Natural killer cell (primary cell): ENCODE measurements at regions of chr12 and their contacts with region 1.

Region 1: DNA sequence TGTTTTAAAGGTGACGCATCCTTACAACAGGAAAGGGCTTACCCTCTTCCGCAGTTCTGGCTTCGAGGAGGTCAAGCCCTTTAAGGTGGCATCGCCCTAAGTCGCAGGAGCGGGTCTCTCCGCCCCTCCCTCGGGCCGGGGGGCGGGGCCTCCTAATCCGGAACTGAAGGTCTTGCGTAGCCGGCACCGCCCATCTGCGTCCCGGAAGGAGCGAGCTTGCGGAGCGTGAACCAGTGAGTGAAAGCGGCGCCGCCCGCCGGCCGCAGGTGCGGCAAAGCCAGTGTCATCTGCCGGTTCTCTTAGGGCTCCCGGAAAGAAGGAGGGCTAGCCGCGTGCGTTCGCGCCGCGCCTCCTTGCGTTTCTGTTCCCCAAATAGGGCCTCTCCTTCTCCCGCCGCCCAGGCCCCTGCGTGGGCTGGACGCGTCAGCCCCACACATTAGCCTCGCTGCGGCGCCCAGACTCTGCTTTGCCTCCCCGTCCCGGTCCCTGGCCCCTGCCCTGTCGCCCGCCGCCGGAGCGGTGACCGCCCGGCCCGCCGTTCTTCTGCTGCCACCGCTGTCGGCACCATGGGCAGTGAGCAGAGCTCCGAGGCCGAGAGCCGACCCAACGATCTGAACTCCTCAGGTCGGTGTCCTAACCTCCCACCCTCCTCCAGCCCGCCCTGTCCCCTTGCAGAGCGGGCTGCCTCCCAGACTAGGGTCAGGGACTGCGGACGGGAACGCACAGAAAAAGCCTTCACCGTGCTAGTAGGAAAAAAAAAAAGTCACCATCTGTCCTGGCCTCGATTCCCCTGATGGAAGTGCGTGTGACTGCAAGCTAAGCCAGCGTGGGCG is at the start of gene BORCS5:
- DNase-seq: peak; percentile 95 to 99
- ATAC-seq: peak; percentile 92 to 98 (median 94)
- H3K4me3 ChIP-seq: peak within 1 kb of the TSS; percentile 78
- H3K4me3 Mint-ChIP-seq: peak within 1 kb of the TSS; percentile 96
- H3K27ac ChIP-seq: peak within 1 kb of the TSS; percentile 97
- H3K27ac Mint-ChIP-seq: peak within 1 kb of the TSS; percentile 92 to 97
- H3K4me1 ChIP-seq: peaks cover 23% of the 10 kb centered on the region
- H3K4me1 Mint-ChIP-seq: peaks cover 26 to 31% of the 10 kb centered on the region in 2 donors
- H3K27me3 ChIP-seq: no peaks in the 10 kb centered on the region
- H3K27me3 Mint-ChIP-seq: no peaks in the 10 kb centered on the region
- CTCF ChIP-seq: no peak
- total RNA-seq, gene BORCS5: 28.5 to 32.8 (median 29.2) TPM

Region 2: GRCh38 chr12:12384571-12385340 is 27.7 kb after region 1 on chr12:
- intact Hi-C with region 1: loop called (anchors 2 kb)
- DNase-seq: peak; percentile 39 to 66
- ATAC-seq: peak; percentile 64 to 73 (median 69)
- H3K4me3 ChIP-seq: no peak overlapping the region
- H3K4me3 Mint-ChIP-seq: peak overlapping the region; percentile 85
- H3K27ac ChIP-seq: peak overlapping the region; percentile 68
- H3K27ac Mint-ChIP-seq: peak overlapping the region; percentile 91 to 96
- H3K4me1 ChIP-seq: peaks cover 38% of the 10 kb centered on the region
- H3K4me1 Mint-ChIP-seq: peaks cover 55% of the 10 kb centered on the region in 2 donors
- H3K27me3 ChIP-seq: no peaks in the 10 kb centered on the region
- H3K27me3 Mint-ChIP-seq: no peaks in the 10 kb centered on the region
- CTCF ChIP-seq: no peak

Region 3: GRCh38 chr12:12562585-12563261 is 205.6 kb after region 1 on chr12 and contains the start of gene DUSP16:
- intact Hi-C with region 1: loop called (anchors 5 kb)
- DNase-seq: peak; percentile 74 to 93
- ATAC-seq: peak; percentile 74 to 92 (median 84)
- H3K4me3 ChIP-seq: peak within 1 kb of the TSS; percentile 67
- H3K4me3 Mint-ChIP-seq: peak within 1 kb of the TSS; percentile 95
- H3K27ac ChIP-seq: peak within 1 kb of the TSS; percentile 88
- H3K27ac Mint-ChIP-seq: peak within 1 kb of the TSS; percentile 90 to 96
- H3K4me1 ChIP-seq: peaks cover 10% of the 10 kb centered on the region
- H3K4me1 Mint-ChIP-seq: peaks cover 10 to 13% of the 10 kb centered on the region in 2 donors
- H3K27me3 ChIP-seq: no peaks in the 10 kb centered on the region
- H3K27me3 Mint-ChIP-seq: peaks cover 0 to 3% of the 10 kb centered on the region in 2 donors
- CTCF ChIP-seq: no peak
- total RNA-seq, gene DUSP16: 6.9 to 19.9 (median 10.0) TPM

Region 4: DNA sequence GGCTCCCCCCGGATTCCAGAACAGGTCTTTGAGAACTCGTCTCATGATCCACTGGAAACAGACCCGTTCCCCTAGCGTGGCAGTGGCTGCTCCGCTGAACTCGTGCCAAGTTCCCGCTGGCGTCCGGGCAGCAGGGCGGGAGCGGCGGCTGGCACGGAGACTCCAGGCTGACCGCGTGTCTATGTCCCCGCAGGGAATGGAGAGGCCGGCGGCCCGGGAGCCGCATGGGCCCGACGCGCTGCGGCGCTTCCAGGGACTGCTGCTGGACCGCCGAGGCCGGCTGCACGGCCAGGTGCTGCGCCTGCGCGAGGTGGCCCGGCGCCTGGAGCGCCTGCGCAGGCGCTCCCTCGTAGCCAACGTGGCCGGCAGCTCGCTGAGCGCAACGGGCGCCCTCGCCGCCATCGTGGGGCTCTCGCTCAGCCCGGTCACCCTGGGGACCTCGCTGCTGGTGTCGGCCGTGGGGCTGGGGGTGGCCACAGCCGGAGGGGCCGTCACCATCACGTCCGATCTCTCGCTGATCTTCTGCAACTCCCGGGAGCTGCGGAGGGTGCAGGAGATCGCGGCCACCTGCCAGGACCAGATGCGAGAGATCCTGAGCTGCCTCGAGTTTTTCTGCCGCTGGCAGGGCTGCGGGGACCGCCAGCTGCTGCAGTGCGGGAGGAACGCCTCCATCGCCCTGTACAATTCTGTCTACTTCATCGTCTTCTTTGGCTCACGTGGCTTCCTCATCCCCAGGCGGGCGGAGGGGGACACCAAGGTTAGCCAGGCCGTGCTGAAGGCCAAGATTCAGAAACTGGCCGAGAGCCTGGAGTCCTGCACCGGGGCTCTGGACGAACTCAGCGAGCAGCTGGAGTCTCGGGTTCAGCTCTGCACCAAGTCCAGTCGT is 429.9 kb after region 1 on chr12:
- intact Hi-C with region 1: no loop called
- DNase-seq: peak; percentile 68 to 90
- ATAC-seq: peak; percentile 92 to 95 (median 94)
- H3K4me3 ChIP-seq: peak overlapping the region; percentile 65
- H3K4me3 Mint-ChIP-seq: peak overlapping the region; percentile 89
- H3K27ac ChIP-seq: peak overlapping the region; percentile 76
- H3K27ac Mint-ChIP-seq: peak overlapping the region; percentile 70 to 84
- H3K4me1 ChIP-seq: peaks cover 17% of the 10 kb centered on the region
- H3K4me1 Mint-ChIP-seq: peaks cover 10 to 23% of the 10 kb centered on the region in 2 donors
- H3K27me3 ChIP-seq: no peaks in the 10 kb centered on the region
- H3K27me3 Mint-ChIP-seq: no peaks in the 10 kb centered on the region
- CTCF ChIP-seq: no peak

Region 5: GRCh38 chr12:12999959-13000615 is 643.0 kb after region 1 on chr12 and contains the start of gene HEBP1:
- intact Hi-C with region 1: loop called (anchors 10 kb)
- DNase-seq: peak; percentile 96
- ATAC-seq: peak; percentile 89 to 99 (median 92)
- H3K4me3 ChIP-seq: peak within 1 kb of the TSS; percentile 78
- H3K4me3 Mint-ChIP-seq: peak within 1 kb of the TSS; percentile 92
- H3K27ac ChIP-seq: peak within 1 kb of the TSS; percentile 76
- H3K27ac Mint-ChIP-seq: peak within 1 kb of the TSS; percentile 78 to 89
- H3K4me1 ChIP-seq: peaks cover 25% of the 10 kb centered on the region
- H3K4me1 Mint-ChIP-seq: peaks cover 24 to 46% of the 10 kb centered on the region in 2 donors
- H3K27me3 ChIP-seq: peaks cover 2% of the 10 kb centered on the region
- H3K27me3 Mint-ChIP-seq: peaks cover 0 to 4% of the 10 kb centered on the region in 2 donors
- CTCF ChIP-seq: no peak
- total RNA-seq, gene HEBP1: 10.8 to 13.5 (median 11.9) TPM